ENCODE measurements at regions of chr2 and their contacts with region 1.

Region 1: GRCh38 chr2:120167272-120167671 is 55.9 kb downstream of the TMEM185B start:
- DNase-seq: no peak
- H3K4me3 Mint-ChIP-seq: no peak overlapping the region
- H3K27ac Mint-ChIP-seq: no peak overlapping the region
- H3K4me1 Mint-ChIP-seq: no peaks in the 10 kb centered on the region
- H3K27me3 Mint-ChIP-seq: no peaks in the 10 kb centered on the region

Region 2: DNA sequence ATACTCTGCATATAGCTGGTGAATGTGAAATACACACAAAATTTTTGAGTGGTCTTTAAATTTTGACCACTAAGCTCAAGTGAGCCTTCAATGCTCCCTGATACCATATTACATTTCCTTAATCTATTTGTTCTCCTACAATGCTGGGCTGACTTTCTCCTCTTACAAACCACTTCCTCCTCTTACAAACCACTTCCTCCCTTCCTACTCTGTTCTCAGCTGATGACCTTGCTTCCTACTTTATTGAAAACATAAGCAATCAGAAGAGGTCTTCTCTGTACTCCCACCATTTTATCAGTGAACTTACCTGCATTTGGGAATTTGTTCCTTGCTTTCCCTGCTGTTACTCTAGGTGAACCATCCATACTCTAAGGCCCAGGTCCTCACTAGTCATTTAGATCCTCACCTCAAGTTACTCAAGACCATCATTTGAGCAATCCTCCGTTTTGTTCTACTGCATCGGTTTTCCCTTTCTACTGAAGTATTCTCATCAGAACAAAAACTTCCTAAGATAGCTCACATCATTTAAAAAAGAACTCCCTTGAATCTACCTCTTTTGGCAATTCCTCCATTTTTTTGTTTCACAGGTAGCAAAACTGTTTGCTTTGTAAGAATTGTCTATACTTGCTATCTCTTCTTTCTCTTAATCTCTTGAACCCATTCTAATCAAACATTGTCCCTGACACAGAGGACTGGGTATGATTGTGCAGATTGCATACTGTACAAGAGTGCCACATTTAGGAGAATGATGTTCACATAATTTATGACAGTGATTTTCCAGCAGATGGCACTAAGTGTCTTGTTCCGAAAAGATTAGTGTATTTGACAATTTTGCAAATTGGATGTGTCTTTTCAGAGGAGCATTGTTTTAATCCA is 57.8 kb before region 1 on chr2:
- CTCF ChIA-PET with region 1: interaction called, 13 read pairs
- DNase-seq: peak; percentile 24
- H3K4me3 Mint-ChIP-seq: peak overlapping the region; percentile 40
- H3K27ac Mint-ChIP-seq: peak overlapping the region; percentile 66
- H3K4me1 Mint-ChIP-seq: peaks cover 29% of the 10 kb centered on the region
- H3K27me3 Mint-ChIP-seq: no peaks in the 10 kb centered on the region